Breast epithelium (tissue), 4 donors: ENCODE measurements at regions of chr7 and their contacts with region 1.

Region 1: GRCh38 chr7:93955304-93955703 is 33.8 kb downstream of the GNG11 start:
- DNase-seq: no peak
- H3K4me3 ChIP-seq: no peak overlapping the region
- H3K27ac ChIP-seq: no peak overlapping the region
- H3K4me1 ChIP-seq: no peaks in the 10 kb centered on the region
- H3K27me3 ChIP-seq: no peaks in the 10 kb centered on the region
- CTCF ChIP-seq: no peak
- POLR2A ChIP-seq: no peak

Region 2: GRCh38 chr7:95669513-95669912 is 1714.2 kb after region 1 on chr7:
- intact Hi-C with region 1: loop called (anchors 5 kb)
- DNase-seq: no peak
- H3K4me3 ChIP-seq: no peak overlapping the region
- H3K27ac ChIP-seq: no peak overlapping the region
- H3K4me1 ChIP-seq: no peaks in the 10 kb centered on the region
- H3K27me3 ChIP-seq: no peaks in the 10 kb centered on the region
- CTCF ChIP-seq: no peak
- POLR2A ChIP-seq: no peak